Psoas muscle (tissue), 8 donors: ENCODE measurements at regions of chr2 and their contacts with region 1.

Region 1: DNA sequence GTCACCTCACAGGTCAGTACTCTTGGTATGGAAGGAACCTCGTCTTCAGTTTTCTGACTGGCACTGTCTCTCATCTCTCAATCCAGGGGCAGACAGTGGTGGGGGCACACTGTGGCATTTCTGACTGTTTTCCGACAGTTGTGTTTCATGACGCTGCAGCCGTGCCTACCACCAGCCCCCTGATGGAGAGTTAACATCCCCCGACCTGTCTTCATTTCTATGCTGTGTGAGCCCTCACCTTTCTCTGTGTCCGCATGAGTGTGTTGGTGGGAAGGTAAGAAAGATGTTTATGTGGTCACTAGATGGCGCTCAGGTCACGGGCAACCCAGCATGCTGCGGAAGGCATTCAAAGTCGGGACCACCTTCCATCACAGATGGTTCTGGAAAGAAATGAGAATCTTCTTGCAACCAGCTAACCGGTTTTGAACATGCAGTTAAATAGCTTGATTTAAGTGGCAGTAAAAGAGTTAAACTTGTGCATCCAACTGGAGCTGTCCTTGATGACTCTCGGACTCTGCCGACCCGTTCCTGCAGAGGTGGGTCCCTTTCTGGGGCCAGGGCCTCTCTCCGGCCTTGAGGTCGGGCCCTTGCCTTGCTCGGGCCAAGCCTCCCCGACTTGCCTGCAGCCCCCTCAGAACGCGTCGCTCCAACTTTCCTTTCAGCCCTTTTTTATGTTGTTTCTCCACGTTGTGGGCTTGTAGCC is 92.4 kb downstream of the DYSF start:
- DNase-seq: peak in 1 of 2 donors; percentile 66
- ATAC-seq: peak; percentile 34 to 76 (median 60)
- H3K4me3 ChIP-seq: peak overlapping the region; percentile 22
- H3K27ac ChIP-seq: peak overlapping the region; percentile 55
- H3K4me1 ChIP-seq: peaks cover 5% of the 10 kb centered on the region
- H3K27me3 ChIP-seq: no peaks in the 10 kb centered on the region
- CTCF ChIP-seq: peak; percentile 61

Region 2: DNA sequence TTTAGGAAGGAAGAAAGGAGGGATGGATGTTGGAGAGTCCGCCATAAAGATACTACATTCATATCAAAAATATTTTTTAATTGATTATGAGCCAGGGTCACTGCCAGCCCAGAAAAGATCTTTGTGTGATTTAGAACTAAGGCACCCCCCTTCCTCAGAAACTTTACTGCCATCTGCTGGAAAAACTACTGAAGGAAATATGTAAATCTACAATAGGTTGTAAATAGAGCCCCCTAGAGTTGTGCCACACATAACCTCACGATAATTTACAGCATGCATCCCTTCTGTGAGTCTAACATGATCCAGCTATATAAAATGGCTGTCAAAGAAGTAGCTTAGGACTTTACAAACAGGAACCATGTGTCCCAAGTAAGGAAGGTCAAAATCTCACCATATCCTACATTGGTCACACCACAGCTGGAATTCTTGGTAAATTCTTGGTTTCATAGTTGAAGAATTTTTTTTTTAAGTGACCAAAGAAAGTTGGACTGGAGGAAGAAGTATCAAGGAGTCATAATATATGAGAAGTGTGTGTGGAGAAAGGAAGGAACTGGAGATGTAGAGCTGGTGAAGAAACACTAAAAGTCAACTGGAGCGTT is 449.4 kb after region 1 on chr2:
- intact Hi-C with region 1: loop called (anchors 5 to 10 kb)
- DNase-seq: no peak
- ATAC-seq: peak in 3 of 4 donors; percentile 56 to 80 (median 80)
- H3K4me3 ChIP-seq: no peak overlapping the region
- H3K27ac ChIP-seq: no peak overlapping the region
- H3K4me1 ChIP-seq: no peaks in the 10 kb centered on the region
- H3K27me3 ChIP-seq: no peaks in the 10 kb centered on the region
- CTCF ChIP-seq: peak; percentile 48

Region 3: DNA sequence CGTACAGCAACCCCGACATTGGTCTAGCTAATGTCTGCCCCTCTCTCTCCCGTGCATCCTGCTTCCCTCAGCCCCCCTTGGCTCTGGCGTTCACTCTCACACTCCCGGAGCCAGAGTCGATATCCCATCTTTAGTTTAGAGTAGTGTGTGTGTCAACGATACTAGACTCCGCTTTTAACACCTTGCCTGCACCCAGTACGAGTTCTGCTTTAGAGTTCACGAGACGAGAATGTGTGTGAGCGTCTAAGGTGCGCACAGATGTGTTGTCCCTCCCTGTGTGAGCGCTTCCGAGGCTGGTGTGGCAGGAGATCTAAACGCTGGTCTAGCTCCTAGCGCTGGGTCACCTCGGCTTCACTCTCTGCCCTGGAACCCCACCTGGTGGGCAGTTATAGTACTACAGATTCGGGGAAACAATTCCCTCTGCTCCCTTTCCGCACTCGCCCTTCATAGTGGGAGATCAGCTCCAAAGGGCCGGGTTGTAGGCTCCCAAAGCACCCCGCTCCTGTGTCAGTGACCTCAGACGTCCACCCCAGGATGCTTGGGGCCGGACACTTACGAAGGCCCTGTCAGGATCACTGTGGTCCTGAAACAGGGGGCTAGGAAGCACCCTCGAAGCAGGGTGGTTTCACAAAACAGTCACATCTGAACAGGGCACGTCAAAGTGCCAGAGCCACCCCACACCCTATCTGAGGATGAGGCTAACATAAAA is 604.6 kb after region 1 on chr2:
- intact Hi-C with region 1: loop called (anchors 2 to 5 kb)
- DNase-seq: peak; percentile 66 to 83
- ATAC-seq: peak; percentile 82 to 89 (median 86)
- H3K4me3 ChIP-seq: peak overlapping the region; percentile 73
- H3K27ac ChIP-seq: no peak overlapping the region
- H3K4me1 ChIP-seq: peaks cover 37% of the 10 kb centered on the region
- H3K27me3 ChIP-seq: peaks cover 0 to 53% (median 22%) of the 10 kb centered on the region in 3 donors
- CTCF ChIP-seq: peak; percentile 88